ENCODE measurements at regions of chr5 and their contacts with region 1.

Region 1: GRCh38 chr5:139968547-139969261 is 74.4 kb downstream of the NRG2 start:
- DNase-seq: peak; percentile 72
- ATAC-seq: peak; percentile 97
- H3K4me3 ChIP-seq: no peak overlapping the region
- H3K27ac ChIP-seq: no peak overlapping the region
- H3K4me1 ChIP-seq: peaks cover 11% of the 10 kb centered on the region
- H3K27me3 ChIP-seq: no peaks in the 10 kb centered on the region
- CTCF ChIP-seq: peak; percentile 99

Region 2: DNA sequence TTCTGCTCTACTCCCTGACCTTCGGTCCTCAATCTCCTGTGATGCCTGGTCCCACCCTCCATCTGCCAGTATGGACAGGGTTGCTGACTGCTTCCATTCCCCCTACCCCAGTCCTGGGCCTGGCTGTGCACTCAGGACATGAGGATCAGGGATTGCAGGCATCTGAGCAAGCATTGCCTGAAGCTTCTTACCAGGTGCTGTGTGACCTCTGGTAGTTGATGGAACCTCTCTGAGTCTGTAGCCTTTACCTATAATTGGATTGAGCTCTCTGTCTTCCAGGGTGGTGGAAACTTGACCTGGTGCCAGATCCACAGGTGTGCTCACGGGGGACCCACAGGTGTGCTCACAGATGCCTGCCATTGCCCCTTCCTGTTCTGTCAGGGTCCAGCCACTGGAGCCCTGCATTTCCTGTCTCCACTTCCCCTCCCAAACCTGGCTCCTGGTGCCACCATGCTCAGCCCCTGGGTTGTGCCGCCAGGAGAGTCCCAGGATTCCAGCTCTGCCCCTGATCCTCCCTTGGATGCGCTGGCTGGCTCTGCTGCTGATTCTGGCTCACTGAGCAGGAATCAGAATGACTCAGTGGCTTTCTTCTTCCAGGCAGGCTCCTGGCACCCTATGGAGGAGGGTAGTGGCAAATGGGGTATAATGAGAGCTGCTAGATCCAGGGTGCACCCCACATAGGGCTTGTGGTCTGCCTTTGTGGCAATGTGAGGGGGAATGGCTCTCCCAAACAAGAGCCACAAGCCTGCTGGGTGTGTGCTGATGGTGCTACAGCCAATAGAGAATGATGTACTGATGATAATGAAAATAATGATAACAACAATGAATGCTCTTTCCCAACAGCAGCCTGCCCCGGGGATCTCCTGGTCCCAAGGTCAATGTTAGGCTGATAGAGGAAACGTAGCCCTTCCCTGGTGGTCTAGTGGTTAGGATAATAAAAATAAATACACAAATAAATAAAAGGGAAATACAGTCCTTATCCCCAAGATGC is 208.3 kb before region 1 on chr5:
- CTCF ChIA-PET with region 1: no interaction called
- POLR2A ChIA-PET with region 1: no interaction called
- in situ Hi-C with region 1: no loop called
- intact Hi-C with region 1: no loop called
- DNase-seq: no peak
- ATAC-seq: no peak
- H3K4me3 ChIP-seq: no peak overlapping the region
- H3K27ac ChIP-seq: no peak overlapping the region
- H3K4me1 ChIP-seq: peaks cover 20% of the 10 kb centered on the region
- H3K27me3 ChIP-seq: 0 out of 2 replicates have a peak, but pooled peaks cover 7% of the 10 kb centered on the region
- CTCF ChIP-seq: no peak

Region 3: DNA sequence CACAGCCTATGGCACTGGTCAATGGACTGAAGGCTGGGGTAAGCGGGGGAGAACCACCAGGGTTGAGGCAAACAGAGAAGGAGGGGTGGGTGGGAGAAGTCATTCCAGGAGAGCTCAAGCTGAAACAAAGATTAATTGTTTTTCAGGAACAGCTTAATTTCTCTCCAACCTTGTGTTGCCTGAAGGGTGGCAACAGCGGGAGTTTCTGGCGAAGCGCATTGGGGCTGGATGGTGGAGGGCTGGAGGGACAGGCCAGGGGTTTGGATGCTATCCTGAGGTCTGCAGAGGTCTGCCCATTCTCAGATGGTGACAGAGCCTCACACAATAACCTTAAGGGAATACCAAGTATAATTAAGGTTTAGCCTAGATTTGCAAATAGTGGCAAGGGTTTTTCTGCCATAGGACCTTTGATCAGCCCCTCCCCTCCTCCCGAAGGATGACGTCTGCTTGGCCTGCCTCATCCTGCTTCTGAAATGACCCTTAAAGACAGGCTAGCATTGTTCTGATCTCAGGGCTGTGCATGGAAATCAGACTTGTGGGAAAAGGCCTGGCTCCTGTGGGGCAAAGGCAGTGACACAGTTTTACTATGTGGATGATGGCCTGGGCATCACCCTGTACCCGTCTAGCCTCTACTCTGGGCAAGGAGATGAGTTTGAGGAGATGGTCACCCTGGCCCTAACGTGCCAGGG is 140.4 kb before region 1 on chr5:
- CTCF ChIA-PET with region 1: interaction called, 4 read pairs
- POLR2A ChIA-PET with region 1: interaction called, 14 read pairs
- in situ Hi-C with region 1: no loop called
- intact Hi-C with region 1: no loop called
- DNase-seq: no peak
- ATAC-seq: 0 out of 2 replicates have a peak, but pooled peaks have one; percentile 38
- H3K4me3 ChIP-seq: no peak overlapping the region
- H3K27ac ChIP-seq: no peak overlapping the region
- H3K4me1 ChIP-seq: no peaks in the 10 kb centered on the region
- H3K27me3 ChIP-seq: peaks cover 21% of the 10 kb centered on the region
- CTCF ChIP-seq: no peak